Thyroid gland (tissue), 4 donors: ENCODE measurements at regions of chr9 and their contacts with region 1.

Region 1: GRCh38 chr9:98192503-98193335 is at the start of gene CORO2A:
- DNase-seq: peak; percentile 81 to 84
- H3K4me3 ChIP-seq: peak within 1 kb of the TSS; percentile 53 to 65 (median 53)
- H3K27ac ChIP-seq: peak within 1 kb of the TSS; percentile 24 to 86 (median 38)
- H3K4me1 ChIP-seq: peaks cover 6 to 8% of the 10 kb centered on the region in 2 donors
- H3K27me3 ChIP-seq: no peaks in the 10 kb centered on the region
- CTCF ChIP-seq: peak in 4 of 6 experiments; percentile 24 to 44 (median 34)
- POLR2A ChIP-seq: peak in 1 of 2 donors; percentile 69
- total RNA-seq, gene CORO2A: 1.1 to 3.5 (median 2.1) TPM

Region 2: GRCh38 chr9:98074115-98074990 is 118.4 kb before region 1 on chr9:
- intact Hi-C with region 1: loop called (anchors 5 kb)
- DNase-seq: peak; percentile 61 to 69
- H3K4me3 ChIP-seq: no peak overlapping the region
- H3K27ac ChIP-seq: no peak overlapping the region
- H3K4me1 ChIP-seq: peaks cover 0 to 7% of the 10 kb centered on the region in 2 donors
- H3K27me3 ChIP-seq: no peaks in the 10 kb centered on the region
- CTCF ChIP-seq: peak; percentile 79 to 97 (median 91)
- POLR2A ChIP-seq: no peak

Region 3: DNA sequence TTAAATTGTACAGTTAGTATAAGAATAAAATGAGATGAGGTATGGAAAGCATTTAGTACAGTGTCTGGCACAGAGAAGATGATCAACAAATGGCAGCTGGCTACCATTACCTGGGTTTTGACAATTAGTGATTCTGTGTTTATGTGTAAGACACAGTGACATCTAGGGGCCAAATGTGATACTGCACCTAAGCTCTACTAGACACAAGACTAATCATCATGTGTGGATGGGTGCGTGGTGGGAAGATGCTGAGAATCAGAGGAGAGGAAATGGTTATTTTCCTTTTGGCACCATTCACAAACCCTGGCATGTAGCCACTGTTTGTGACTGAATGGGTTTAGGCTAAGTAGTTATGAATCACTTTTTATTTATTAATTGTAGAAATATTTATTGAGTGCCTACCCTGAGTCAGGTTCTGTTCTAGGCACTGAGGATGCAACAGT is 172.5 kb after region 1 on chr9:
- intact Hi-C with region 1: no loop called
- DNase-seq: no peak
- H3K4me3 ChIP-seq: no peak overlapping the region
- H3K27ac ChIP-seq: no peak overlapping the region
- H3K4me1 ChIP-seq: no peaks in the 10 kb centered on the region
- H3K27me3 ChIP-seq: no peaks in the 10 kb centered on the region
- CTCF ChIP-seq: peak in 1 of 6 experiments; percentile 20
- POLR2A ChIP-seq: no peak